CD4-positive, alpha-beta T cell (primary cell): ENCODE measurements at regions of chr5 and their contacts with region 1.

Region 1: DNA sequence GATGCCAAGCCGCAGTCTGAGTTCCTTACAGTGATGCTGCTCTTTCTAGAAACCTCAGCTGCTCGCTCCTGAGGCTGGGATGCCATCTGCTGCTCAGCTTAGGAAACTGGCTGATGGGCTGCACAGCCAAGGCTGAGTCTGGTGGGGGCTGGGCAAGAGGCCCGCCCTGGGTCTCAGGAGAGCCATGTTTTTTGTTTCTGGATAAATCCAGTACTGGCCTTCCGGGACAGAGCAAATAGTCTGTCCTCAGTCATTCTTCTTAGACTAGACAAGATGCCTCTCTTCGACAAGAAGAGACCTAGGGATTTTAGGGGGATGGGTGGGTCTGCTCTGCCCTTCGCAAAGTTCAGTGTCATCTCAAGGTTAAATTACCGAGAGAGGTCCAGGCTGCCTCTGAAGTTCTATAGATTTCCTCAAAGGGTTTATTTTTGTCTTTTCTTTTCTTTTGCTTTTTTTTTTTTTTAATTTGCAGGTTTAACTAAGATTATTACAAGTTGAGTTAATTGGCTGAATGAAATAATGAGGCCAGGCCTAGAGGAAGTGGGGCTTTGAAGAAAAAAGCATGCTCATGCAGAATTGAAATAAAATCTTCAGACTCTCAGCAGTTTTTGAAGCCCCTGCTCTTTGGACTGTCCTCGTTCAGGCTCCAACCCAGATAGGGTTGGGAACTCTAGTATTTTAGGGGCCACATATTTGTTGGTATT is 30.6 kb upstream of the MATR3 start:
- DNase-seq: peak; percentile 36 to 83 (median 56)
- ATAC-seq: peak; percentile 100
- H3K4me3 ChIP-seq: no peak overlapping the region
- H3K4me3 Mint-ChIP-seq: no peak overlapping the region
- H3K27ac ChIP-seq: no peak overlapping the region
- H3K27ac Mint-ChIP-seq: no peak overlapping the region
- H3K4me1 ChIP-seq: peaks cover 8% of the 10 kb centered on the region
- H3K4me1 Mint-ChIP-seq: peaks cover 10% of the 10 kb centered on the region
- H3K27me3 ChIP-seq: peaks cover 0 to 5% of the 10 kb centered on the region in 2 experiments
- H3K27me3 Mint-ChIP-seq: peaks cover 4% of the 10 kb centered on the region
- CTCF ChIP-seq: peak; percentile 67

Region 2: GRCh38 chr5:138449501-138450239 is 813.2 kb before region 1 on chr5:
- CTCF ChIA-PET with region 1: no interaction called
- POLR2A ChIA-PET with region 1: no interaction called
- intact Hi-C with region 1: loop called in 1 of 2 experiments (anchors 5 kb)
- DNase-seq: peak; percentile 56 to 87 (median 67)
- ATAC-seq: peak; percentile 87
- H3K4me3 ChIP-seq: no peak overlapping the region
- H3K4me3 Mint-ChIP-seq: no peak overlapping the region
- H3K27ac ChIP-seq: no peak overlapping the region
- H3K27ac Mint-ChIP-seq: peak overlapping the region; percentile 54
- H3K4me1 ChIP-seq: peaks cover 10% of the 10 kb centered on the region
- H3K4me1 Mint-ChIP-seq: peaks cover 6% of the 10 kb centered on the region
- H3K27me3 ChIP-seq: no peaks in the 10 kb centered on the region
- H3K27me3 Mint-ChIP-seq: no peaks in the 10 kb centered on the region
- CTCF ChIP-seq: peak; percentile 94

Region 3: DNA sequence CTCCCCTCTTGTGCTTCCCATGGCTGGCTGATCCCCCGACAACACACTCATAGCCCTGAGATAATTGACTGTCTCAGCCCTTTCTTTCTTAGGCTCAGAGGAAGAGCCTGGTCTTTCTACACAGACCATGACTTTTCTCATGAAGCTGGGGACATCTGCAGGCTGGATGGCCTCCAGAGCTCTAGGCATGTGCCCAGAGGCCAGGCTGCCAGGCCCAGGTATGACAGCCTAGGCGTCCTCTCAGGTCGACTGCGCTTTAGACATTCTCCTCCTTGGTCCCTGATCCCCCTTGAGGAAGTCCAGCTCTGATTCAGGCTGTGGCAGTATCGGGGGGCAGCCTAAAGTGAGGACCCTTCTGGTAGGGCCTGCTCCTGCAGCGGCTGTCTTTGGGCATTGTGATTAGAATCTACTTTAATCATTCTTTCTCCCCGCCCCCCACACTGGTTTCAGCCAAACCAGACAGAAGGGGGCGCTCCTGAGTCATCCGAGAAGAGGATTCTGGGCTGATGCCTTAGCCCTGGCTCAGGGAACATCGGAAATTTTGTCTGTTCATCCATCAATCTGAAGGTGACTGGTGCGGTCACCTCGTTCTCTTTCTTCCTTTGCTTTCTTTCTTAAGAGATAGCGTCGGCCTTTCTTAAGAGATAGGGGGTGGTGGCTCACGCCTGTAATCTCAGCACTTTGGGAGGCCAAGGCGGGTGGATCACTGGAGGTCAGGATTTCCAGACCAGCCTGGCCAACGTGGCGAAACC is 621.2 kb before region 1 on chr5:
- CTCF ChIA-PET with region 1: no interaction called
- POLR2A ChIA-PET with region 1: no interaction called
- intact Hi-C with region 1: loop called (anchors 1 to 5 kb)
- DNase-seq: peak; percentile 36 to 75 (median 60)
- ATAC-seq: peak; percentile 62
- H3K4me3 ChIP-seq: no peak overlapping the region
- H3K4me3 Mint-ChIP-seq: no peak overlapping the region
- H3K27ac ChIP-seq: no peak overlapping the region
- H3K27ac Mint-ChIP-seq: no peak overlapping the region
- H3K4me1 ChIP-seq: no peaks in the 10 kb centered on the region
- H3K4me1 Mint-ChIP-seq: no peaks in the 10 kb centered on the region
- H3K27me3 ChIP-seq: peaks cover 79 to 86% of the 10 kb centered on the region in 2 experiments
- H3K27me3 Mint-ChIP-seq: peaks cover 96% of the 10 kb centered on the region
- CTCF ChIP-seq: peak; percentile 35

Region 4: GRCh38 chr5:138824924-138825863 is 437.7 kb before region 1 on chr5:
- CTCF ChIA-PET with region 1: no interaction called
- POLR2A ChIA-PET with region 1: no interaction called
- intact Hi-C with region 1: loop called in 1 of 2 experiments (anchors 2 kb)
- DNase-seq: peak in 3 of 14 experiments; percentile 5 to 22 (median 20)
- ATAC-seq: no peak
- H3K4me3 ChIP-seq: no peak overlapping the region
- H3K4me3 Mint-ChIP-seq: no peak overlapping the region
- H3K27ac ChIP-seq: no peak overlapping the region
- H3K27ac Mint-ChIP-seq: no peak overlapping the region
- H3K4me1 ChIP-seq: no peaks in the 10 kb centered on the region
- H3K4me1 Mint-ChIP-seq: no peaks in the 10 kb centered on the region
- H3K27me3 ChIP-seq: no peaks in the 10 kb centered on the region
- H3K27me3 Mint-ChIP-seq: peaks cover 10% of the 10 kb centered on the region
- CTCF ChIP-seq: peak; percentile 85

Region 5: DNA sequence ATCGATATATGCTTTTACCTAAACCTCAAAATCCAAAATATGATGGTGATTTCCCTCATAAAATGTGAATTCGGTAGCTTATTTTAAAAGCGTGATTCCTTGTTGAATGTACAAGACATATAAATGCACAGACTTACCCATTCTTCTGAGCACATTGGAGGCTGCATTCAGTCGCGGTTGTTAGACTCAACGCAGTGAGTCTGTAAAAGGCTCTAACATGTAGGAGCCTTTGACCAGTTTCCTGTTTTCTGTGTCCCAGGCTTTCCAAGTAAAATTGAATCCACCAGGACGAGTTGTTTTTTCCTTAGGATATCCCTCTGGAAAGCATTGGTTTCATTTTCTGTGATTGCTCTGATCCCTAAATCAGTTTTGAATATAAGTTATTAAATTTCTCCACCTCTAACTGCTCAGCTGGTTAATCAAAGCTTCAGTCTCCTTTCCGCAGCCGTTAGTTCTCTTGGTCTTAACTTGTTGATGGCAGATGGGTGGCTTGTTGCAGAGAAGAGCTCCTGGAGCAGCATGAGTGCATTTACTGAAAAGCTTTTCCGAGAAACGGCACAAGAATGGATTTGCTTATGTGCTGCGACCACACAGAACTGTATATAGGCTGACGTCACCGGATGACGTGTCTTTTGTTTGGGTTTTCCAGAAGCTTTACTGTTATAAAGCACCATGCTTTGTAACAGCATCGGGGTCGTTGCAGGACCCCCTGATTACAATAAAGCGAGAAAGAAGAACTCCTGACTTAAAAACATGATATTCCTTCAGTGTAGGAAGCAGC is 387.9 kb before region 1 on chr5 and contains the start of gene LRRTM2:
- CTCF ChIA-PET with region 1: no interaction called
- POLR2A ChIA-PET with region 1: no interaction called
- intact Hi-C with region 1: loop called in 1 of 2 experiments (anchors 5 kb)
- DNase-seq: no peak
- ATAC-seq: no peak
- H3K4me3 ChIP-seq: no peak within 1 kb of the TSS
- H3K4me3 Mint-ChIP-seq: no peak within 1 kb of the TSS
- H3K27ac ChIP-seq: no peak within 1 kb of the TSS
- H3K27ac Mint-ChIP-seq: no peak within 1 kb of the TSS
- H3K4me1 ChIP-seq: no peaks in the 10 kb centered on the region
- H3K4me1 Mint-ChIP-seq: peaks cover 13% of the 10 kb centered on the region
- H3K27me3 ChIP-seq: peaks cover 0 to 7% of the 10 kb centered on the region in 2 experiments
- H3K27me3 Mint-ChIP-seq: peaks cover 33% of the 10 kb centered on the region
- CTCF ChIP-seq: no peak
- total RNA-seq, gene LRRTM2: 0.03 to 0.22 TPM